ENCODE measurements at regions of chr10 and their contacts with region 1.

Region 1: DNA sequence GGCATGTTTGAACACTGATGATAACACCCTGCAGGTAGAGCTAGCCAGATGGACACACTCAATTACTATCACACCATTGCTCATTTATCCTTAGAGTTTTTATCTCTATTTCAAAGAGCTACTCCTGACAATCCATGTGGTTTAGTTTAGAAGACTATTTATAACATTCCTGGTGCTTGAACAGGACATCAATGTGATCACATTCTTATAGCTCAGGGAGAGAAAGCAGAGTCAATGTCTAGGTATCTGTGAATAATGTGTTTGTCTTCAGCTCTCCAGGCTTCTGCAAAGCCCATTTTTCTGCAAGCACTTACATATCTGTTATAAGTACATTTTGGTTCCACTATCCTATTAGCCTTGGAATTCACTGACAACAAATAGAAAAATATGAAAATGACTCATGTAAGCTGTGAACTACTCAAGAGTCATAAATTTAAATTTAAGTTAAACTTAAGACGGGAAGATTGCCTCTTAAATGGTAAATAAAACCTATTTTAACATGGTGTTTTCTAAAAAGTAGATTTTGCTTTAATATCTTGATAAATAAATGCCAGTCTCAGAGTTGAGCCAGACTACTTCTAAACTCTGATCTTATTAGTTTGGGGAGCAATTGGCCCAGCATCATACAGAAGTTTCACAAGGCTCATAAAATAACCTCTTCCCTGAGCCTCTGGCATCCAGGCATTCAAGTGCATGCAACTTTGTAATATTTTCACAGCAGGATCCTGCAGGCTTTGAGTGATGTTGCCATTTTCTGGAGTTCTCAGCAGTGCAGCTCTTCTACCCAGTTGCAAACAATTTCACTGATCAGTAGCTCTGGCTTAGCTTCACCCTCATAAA is 106.8 kb upstream of the MBL2 start:
- DNase-seq: no peak
- H3K4me3 ChIP-seq: no peak overlapping the region
- H3K27ac ChIP-seq: no peak overlapping the region
- H3K4me1 ChIP-seq: no peaks in the 10 kb centered on the region
- H3K27me3 ChIP-seq: no peaks in the 10 kb centered on the region
- CTCF ChIP-seq: no peak
- POLR2A ChIP-seq: no peak

Region 2: DNA sequence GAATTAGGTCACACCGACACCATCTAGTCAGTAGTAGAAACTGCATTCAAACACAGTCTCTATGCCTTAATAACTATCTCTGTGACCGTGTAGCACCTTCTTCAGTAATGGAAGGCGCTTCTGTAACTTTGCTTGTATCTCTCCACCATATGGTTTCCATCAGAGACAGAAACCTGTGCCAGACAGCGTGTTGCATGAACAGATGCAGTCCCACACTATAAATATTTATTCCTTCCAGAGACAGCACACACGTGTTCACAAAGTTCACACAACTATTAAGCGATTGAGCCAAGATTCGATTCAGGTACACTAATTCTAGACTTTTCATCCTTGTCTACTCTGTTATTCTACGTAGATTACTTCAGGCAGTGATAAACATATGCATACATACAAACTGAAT is 767.1 kb after region 1 on chr10:
- intact Hi-C with region 1: loop called (anchors 5 kb)
- DNase-seq: no peak
- H3K4me3 ChIP-seq: no peak overlapping the region
- H3K27ac ChIP-seq: no peak overlapping the region
- H3K4me1 ChIP-seq: no peaks in the 10 kb centered on the region
- H3K27me3 ChIP-seq: no peaks in the 10 kb centered on the region
- CTCF ChIP-seq: no peak
- POLR2A ChIP-seq: no peak

Measured in breast epithelium (tissue), 4 donors.